Activated CD4-positive, alpha-beta T cell treated with anti-CD3 and anti-CD28 coated beads, Interleukin-2, amount 10 ng/mL, durations not matched to agents 7 days and 5 days (primary cell): ENCODE measurements at regions of chr4 and their contacts with region 1.

Region 1: DNA sequence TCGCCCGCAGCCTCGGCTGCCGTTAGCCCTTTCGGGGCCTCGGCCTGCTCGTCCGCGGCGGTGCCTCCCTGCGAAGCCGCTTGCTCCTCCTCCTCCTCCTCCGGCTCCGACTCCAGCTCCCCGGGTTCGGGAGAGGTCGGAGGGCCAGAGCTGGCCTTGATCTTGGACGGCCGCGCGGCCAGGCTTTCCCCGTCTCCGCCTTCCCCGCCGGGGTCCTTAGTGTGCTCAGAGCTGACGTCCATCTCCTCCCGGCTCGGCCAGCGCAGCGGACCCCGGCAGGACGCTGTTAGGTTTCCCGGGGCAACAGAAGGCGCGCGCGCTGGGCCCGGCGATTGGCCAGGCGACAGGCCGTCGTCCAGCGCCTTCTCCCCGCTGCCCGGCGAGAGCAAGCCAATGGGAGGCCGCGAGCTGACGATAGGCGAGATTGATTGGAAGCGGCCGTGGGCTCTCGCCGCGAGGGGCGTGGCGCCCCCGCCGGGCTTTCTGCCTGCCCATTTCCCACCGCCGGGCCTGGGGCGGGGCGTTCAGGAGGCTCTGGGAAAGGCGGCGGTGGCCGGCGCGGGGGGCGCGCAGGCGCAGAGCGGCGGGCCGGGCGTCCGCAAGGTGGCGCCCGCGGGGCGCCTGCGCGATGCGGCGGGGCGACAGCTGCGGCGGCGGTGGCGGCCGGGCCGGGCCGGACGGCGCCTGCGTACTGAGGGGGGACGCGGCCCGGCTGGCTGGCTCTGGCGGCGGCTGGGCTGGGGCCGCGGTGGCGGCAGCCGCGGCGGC is at the start of gene TADA2B:
- DNase-seq: peak; percentile 92
- H3K4me3 Mint-ChIP-seq: peak within 1 kb of the TSS; percentile 90
- H3K27ac Mint-ChIP-seq: peak within 1 kb of the TSS; percentile 87
- H3K4me1 Mint-ChIP-seq: peaks cover 43% of the 10 kb centered on the region
- H3K27me3 Mint-ChIP-seq: peaks cover 6% of the 10 kb centered on the region
- total RNA-seq, gene TADA2B: 25.5 to 26.1 TPM

Region 2: DNA sequence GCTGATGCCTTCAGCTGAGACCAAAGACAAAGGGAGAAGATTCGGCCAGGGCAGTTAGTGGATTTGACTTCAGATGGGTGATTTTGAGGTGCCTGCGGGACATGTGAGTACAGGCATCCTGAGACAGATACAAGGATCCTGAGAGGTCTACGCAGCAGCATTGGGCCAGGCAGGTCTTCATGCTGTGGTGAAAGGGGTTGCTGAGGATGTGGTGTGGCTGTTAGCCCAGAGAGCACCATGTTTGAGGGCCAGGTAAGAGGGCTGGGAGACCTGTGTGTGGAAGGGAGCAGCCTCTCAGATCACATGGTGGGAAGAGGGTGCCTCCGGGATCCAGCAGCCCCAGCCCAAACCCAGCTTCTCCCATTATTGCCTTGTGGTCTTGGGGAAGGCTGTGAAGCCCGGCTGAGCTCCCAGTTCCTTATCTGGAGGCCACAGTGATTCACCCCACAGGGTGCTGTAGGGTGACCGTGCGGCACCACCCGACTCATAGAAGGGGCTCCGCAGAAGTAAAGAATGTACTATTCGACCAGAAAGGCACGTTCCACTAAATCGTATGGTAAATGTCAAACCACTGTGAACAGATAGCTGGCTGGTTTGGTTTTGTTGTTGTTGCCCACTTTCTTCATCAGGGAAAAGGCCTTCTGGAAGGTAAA is 27.4 kb before region 1 on chr4:
- CTCF ChIA-PET with region 1: interaction called, 10 read pairs
- POLR2A ChIA-PET with region 1: no interaction called
- DNase-seq: no peak
- H3K4me3 Mint-ChIP-seq: no peak overlapping the region
- H3K27ac Mint-ChIP-seq: no peak overlapping the region
- H3K4me1 Mint-ChIP-seq: peaks cover 16% of the 10 kb centered on the region
- H3K27me3 Mint-ChIP-seq: no peaks in the 10 kb centered on the region

Region 3: GRCh38 chr4:7052923-7053715 is 10.2 kb after region 1 on chr4:
- CTCF ChIA-PET with region 1: interaction called, 28 read pairs
- POLR2A ChIA-PET with region 1: no interaction called
- DNase-seq: peak; percentile 22
- H3K4me3 Mint-ChIP-seq: peak overlapping the region; percentile 5
- H3K27ac Mint-ChIP-seq: peak overlapping the region; percentile 76
- H3K4me1 Mint-ChIP-seq: peaks cover 24% of the 10 kb centered on the region
- H3K27me3 Mint-ChIP-seq: no peaks in the 10 kb centered on the region

Region 4: DNA sequence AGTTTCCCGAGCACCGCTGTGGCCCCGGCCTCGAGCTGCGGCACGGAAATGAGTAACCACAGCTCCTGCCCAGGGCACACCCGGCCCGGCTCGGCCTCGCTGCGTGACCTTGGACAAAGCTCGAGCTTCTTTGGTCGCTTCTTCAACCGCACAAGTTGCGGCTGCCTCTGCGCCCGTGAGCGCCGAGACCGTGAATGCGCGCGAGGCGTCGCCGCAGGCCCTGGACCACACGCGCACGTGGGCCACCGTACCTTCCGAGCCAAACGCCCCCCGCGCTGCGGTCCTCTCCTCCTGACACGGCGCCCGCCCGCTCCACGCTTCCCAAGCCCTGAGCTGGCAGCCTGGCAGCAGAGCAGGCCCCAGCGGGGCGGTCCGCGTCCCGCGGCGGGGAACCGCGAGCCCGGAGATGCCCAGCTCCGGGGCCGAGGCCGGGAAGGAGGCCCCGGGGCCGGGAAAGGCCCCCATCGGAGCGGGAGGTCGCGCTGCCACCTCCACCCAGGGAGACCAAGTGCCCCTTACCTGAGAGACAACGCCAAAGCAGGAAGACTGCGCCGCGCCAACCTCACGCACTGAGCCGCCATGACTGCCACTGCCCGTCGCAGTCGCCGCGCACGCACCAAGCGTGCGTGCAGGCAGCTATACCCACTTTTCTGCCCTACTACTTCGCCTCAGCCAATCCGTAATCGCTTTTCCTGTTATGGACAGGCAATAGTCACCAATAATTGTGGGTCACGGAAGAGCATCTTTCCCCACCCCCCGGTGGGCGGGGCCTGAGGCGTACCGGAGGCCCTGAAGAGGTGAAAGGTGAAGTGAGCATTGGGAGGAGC is 24.8 kb after region 1 on chr4 and contains the start of gene GRPEL1:
- CTCF ChIA-PET with region 1: interaction called, 128 read pairs
- POLR2A ChIA-PET with region 1: interaction called, 5 read pairs
- DNase-seq: peak; percentile 100
- H3K4me3 Mint-ChIP-seq: peak within 1 kb of the TSS; percentile 92
- H3K27ac Mint-ChIP-seq: peak within 1 kb of the TSS; percentile 94
- H3K4me1 Mint-ChIP-seq: peaks cover 49% of the 10 kb centered on the region
- H3K27me3 Mint-ChIP-seq: peaks cover 9% of the 10 kb centered on the region
- total RNA-seq, gene GRPEL1: 34.8 to 35.4 TPM

Region 5: GRCh38 chr4:7295911-7296660 is 253.2 kb after region 1 on chr4:
- CTCF ChIA-PET with region 1: no interaction called
- POLR2A ChIA-PET with region 1: no interaction called
- DNase-seq: no peak
- H3K4me3 Mint-ChIP-seq: no peak overlapping the region
- H3K27ac Mint-ChIP-seq: no peak overlapping the region
- H3K4me1 Mint-ChIP-seq: no peaks in the 10 kb centered on the region
- H3K27me3 Mint-ChIP-seq: no peaks in the 10 kb centered on the region